Heart right ventricle (tissue), 16 donors: ENCODE measurements at regions of chr12 and their contacts with region 1.

Region 1: GRCh38 chr12:103965590-103966504 is at the start of gene TDG:
- DNase-seq: peak; percentile 97 to 99
- ATAC-seq: peak; percentile 98 to 99 (median 99)
- H3K4me3 ChIP-seq: peak within 1 kb of the TSS; percentile 60 to 99 (median 90)
- H3K27ac ChIP-seq: peak within 1 kb of the TSS; percentile 82 to 99 (median 97)
- H3K4me1 ChIP-seq: peaks cover 3 to 69% (median 56%) of the 10 kb centered on the region in 9 donors
- H3K27me3 ChIP-seq: no peaks in the 10 kb centered on the region
- CTCF ChIP-seq: peak in 7 of 9 donors; percentile 5 to 49 (median 18)
- total RNA-seq, gene TDG: 8.7 to 17.4 (median 11.7) TPM

Region 2: GRCh38 chr12:103868215-103868614 is 97.6 kb before region 1 on chr12:
- intact Hi-C with region 1: no loop called
- DNase-seq: no peak
- ATAC-seq: no peak
- H3K4me3 ChIP-seq: no peak overlapping the region
- H3K27ac ChIP-seq: no peak overlapping the region
- H3K4me1 ChIP-seq: no peaks in the 10 kb centered on the region
- H3K27me3 ChIP-seq: no peaks in the 10 kb centered on the region
- CTCF ChIP-seq: no peak

Region 3: GRCh38 chr12:103930034-103930786 is 35.6 kb before region 1 on chr12 and contains the start of gene HSP90B1:
- intact Hi-C with region 1: loop called in 4 of 10 experiments (anchors 2 to 5 kb)
- DNase-seq: peak; percentile 98 to 100
- ATAC-seq: peak; percentile 91 to 95 (median 94)
- H3K4me3 ChIP-seq: peak within 1 kb of the TSS; percentile 61 to 95 (median 78)
- H3K27ac ChIP-seq: peak within 1 kb of the TSS; percentile 88 to 98 (median 94)
- H3K4me1 ChIP-seq: peaks cover 5 to 61% (median 50%) of the 10 kb centered on the region in 9 donors
- H3K27me3 ChIP-seq: no peaks in the 10 kb centered on the region
- CTCF ChIP-seq: no peak
- total RNA-seq, gene HSP90B1: 235 to 487 (median 297) TPM

Region 4: DNA sequence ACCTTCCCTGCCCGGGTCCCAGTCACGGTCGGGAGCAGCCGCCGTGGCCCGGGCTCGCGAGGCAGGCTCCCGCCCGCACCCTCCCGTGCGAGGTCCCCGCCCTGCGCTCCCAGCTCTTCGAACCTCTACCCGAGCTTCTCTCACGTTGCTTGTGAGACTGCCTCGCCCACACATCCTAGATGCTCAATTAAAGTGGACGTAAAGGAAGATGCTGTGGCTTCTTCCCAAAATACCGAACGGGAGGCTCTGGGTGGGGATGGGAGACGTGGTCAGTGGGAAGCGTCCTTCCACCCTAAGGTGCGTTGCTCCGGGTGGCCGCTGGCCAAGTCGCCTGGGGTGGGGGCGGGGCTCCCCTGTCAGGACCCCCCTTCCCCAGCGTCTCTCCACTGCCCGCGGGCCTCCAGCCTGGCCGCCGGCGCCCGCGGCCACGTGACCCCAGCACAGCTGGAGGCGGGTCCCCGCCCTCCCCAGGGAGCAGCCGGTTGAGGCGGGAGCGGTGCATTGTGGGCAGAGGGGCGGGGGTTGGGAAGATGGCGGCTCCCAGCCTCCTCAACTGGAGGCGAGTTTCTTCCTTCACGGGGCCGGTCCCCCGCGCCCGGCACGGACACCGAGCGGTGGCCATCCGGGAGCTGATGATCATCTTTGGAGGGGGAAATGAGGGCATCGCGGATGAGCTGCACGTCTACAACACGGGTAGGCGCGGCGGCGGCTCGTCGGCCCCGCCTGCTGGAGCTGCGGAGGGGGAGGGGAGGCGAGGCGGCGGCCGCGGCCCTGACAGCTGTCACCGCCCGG is 98.4 kb after region 1 on chr12 and contains the start of gene HCFC2:
- intact Hi-C with region 1: loop called in 5 of 10 experiments (anchors 5 to 10 kb)
- DNase-seq: peak; percentile 94
- ATAC-seq: peak; percentile 99
- H3K4me3 ChIP-seq: peak within 1 kb of the TSS; percentile 67 to 98 (median 93)
- H3K27ac ChIP-seq: peak within 1 kb of the TSS; percentile 75 to 97 (median 94)
- H3K4me1 ChIP-seq: peaks cover 0 to 41% (median 29%) of the 10 kb centered on the region in 9 donors
- H3K27me3 ChIP-seq: no peaks in the 10 kb centered on the region
- CTCF ChIP-seq: peak in 1 of 9 donors; percentile 15
- total RNA-seq, gene HCFC2: 8.6 to 13.6 (median 11.3) TPM